ENCODE measurements at regions of chr2 and their contacts with region 1.

Region 1: DNA sequence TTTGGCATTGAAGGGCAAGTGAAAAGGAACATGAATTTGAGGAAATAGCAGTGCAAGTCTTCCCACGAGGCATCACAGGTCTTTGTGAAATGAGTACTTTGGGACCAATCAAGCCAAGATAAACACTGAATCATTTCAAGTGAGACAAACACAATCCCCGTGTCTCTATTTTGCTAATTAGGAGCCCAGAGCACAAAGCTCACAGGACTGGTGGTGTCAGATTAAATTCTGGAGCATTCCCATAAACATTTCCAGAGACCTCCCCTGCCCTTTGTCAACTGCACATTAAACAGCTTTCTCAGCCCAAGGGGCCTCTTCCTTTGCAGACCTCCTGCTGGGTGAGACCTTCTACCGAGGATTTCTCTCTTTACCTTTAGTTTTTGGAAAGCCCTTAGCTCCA is 50.7 kb downstream of the DAPL1 start:
- DNase-seq: no peak
- ATAC-seq: no peak
- H3K4me3 ChIP-seq: no peak overlapping the region
- H3K27ac ChIP-seq: no peak overlapping the region
- H3K4me1 ChIP-seq: peaks cover 5% of the 10 kb centered on the region; the same call in 1 of the 2 replicates
- H3K27me3 ChIP-seq: peaks cover 25% of the 10 kb centered on the region
- CTCF ChIP-seq: no peak
- POLR2A ChIP-seq: no peak
- RAD21 ChIP-seq: no peak

Region 2: DNA sequence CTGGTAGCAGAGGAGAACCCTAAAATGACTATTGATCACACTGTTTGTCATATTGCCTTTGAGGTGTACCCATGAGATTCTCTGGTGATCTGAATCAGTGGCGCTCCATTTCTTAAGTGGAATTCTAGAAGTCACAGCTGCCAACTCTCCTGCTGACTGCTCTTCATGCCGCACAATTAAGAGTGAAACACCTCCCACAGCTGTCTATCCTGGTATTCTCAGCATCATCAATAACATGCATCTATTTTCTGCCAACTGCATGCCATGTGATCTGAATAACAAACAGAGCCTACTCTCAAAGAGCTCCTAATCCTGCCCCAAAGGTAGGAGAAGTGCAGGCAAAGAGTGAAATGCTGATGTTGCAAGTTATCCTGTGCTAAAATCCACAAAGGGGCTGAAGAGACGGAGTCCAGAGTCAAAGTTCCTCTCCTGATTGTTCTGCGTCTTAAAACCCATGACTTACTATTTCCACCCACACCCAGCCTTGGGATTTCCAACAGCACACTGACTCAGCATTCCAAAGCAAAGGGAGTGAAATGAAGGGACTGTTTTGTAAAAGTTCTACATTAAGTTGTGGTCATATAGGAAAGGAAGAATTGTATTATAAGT is 64.4 kb before region 1 on chr2:
- CTCF ChIA-PET with region 1: no interaction called
- POLR2A ChIA-PET with region 1: no interaction called
- dilution Hi-C with region 1: no loop called
- in situ Hi-C with region 1: no loop called
- intact Hi-C with region 1: no loop called
- DNase-seq: peak; percentile 37
- ATAC-seq: peak; percentile 35; the same call in 1 of the 2 replicates
- H3K4me3 ChIP-seq: no peak overlapping the region
- H3K27ac ChIP-seq: no peak overlapping the region
- H3K4me1 ChIP-seq: no peaks in the 10 kb centered on the region
- H3K27me3 ChIP-seq: no peaks in the 10 kb centered on the region
- CTCF ChIP-seq: no peak
- POLR2A ChIP-seq: no peak
- RAD21 ChIP-seq: no peak

Region 3: DNA sequence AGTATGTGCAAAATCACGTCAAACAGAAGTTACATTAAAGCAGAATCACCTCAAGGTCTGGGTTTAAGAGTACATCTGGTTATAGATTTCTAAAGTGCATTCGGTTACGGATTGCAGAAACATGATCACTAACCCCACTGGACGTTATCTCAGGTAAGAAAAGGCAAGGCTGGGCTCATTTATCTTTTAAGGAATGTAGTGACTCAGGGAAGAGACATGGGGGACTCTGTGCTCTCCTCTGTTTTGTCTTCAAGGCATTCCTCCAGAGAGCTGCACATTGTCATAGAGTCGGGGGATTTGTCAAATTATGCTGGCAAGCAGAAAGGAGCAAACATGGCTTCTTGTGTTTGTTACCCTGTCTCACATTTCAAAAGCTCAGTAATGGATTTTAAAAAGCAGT is 426.3 kb after region 1 on chr2:
- CTCF ChIA-PET with region 1: no interaction called
- POLR2A ChIA-PET with region 1: no interaction called
- dilution Hi-C with region 1: no loop called
- in situ Hi-C with region 1: no loop called
- intact Hi-C with region 1: no loop called
- DNase-seq: no peak
- ATAC-seq: no peak
- H3K4me3 ChIP-seq: no peak overlapping the region
- H3K27ac ChIP-seq: no peak overlapping the region
- H3K4me1 ChIP-seq: peaks cover 4% of the 10 kb centered on the region; the same call in 1 of the 2 replicates
- H3K27me3 ChIP-seq: no peaks in the 10 kb centered on the region
- CTCF ChIP-seq: no peak
- POLR2A ChIP-seq: no peak
- RAD21 ChIP-seq: no peak

Region 4: DNA sequence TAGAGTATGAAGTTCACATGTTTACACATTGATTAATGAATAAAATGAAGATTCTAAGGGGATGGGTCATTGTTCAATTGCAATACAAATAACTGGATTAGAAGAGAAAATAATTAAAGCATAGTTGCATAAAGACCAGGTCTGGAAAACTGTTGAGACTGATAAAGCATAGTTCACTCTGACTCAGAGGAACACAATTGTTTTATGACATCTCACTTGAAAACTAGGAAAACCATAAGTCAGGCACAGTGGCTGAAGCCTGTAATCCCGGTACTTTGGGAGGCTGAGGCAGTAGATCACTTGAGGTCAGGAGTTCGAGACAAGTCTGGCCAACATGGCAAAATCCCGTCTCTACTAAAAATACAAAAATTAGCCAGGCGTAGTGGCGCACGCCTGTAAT is 1169.9 kb after region 1 on chr2:
- CTCF ChIA-PET with region 1: no interaction called
- POLR2A ChIA-PET with region 1: no interaction called
- dilution Hi-C with region 1: no loop called
- in situ Hi-C with region 1: no loop called
- intact Hi-C with region 1: loop called (anchors 5 kb)
- DNase-seq: no peak
- ATAC-seq: no peak
- H3K4me3 ChIP-seq: no peak overlapping the region
- H3K27ac ChIP-seq: no peak overlapping the region
- H3K4me1 ChIP-seq: no peaks in the 10 kb centered on the region
- H3K27me3 ChIP-seq: peaks cover 4% of the 10 kb centered on the region
- CTCF ChIP-seq: no peak
- POLR2A ChIP-seq: no peak
- RAD21 ChIP-seq: no peak

Region 5: GRCh38 chr2:160652236-160652635 is 1806.4 kb after region 1 on chr2:
- CTCF ChIA-PET with region 1: no interaction called
- POLR2A ChIA-PET with region 1: no interaction called
- dilution Hi-C with region 1: no loop called
- in situ Hi-C with region 1: no loop called
- intact Hi-C with region 1: no loop called
- DNase-seq: no peak
- ATAC-seq: no peak
- H3K4me3 ChIP-seq: no peak overlapping the region
- H3K27ac ChIP-seq: no peak overlapping the region
- H3K4me1 ChIP-seq: peaks cover 1% of the 10 kb centered on the region; the same call in 1 of the 2 replicates
- H3K27me3 ChIP-seq: no peaks in the 10 kb centered on the region
- CTCF ChIP-seq: no peak
- POLR2A ChIP-seq: no peak
- RAD21 ChIP-seq: no peak

Measured in IMR-90 (cell line).